Calu3 (cell line): ENCODE measurements at regions of chr7 and their contacts with region 1.

Region 1: DNA sequence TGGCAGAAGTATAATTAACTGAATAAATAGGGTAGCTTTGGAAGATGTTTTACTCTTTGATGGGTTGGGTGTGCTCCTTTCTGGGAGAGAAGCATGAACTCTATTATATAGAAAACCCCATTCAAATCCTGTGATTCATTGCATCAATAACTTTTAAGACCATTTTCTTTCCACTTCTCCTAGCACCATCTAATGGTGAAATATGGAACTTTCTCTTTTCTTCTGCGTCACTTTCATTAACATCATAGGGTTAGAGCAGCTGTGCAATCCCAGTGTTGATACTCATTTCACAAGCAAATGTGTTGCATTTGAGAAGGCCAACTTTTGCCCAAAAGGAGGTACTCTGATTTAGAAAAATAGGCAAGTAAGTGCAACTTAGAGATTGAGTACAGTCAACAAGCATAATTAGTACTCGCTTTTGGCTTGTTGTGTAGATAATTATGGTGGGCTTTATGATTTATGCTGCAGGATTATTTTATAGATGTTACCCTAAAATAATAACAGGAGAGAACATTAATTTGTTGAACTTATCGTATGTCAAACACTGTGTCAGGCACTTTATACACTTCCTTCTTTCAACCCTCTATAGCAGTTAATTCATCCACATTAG is 92.9 kb downstream of the CPED1 start:
- DNase-seq: no peak
- H3K4me3 Mint-ChIP-seq: no peak overlapping the region
- H3K27ac Mint-ChIP-seq: no peak overlapping the region
- H3K4me1 Mint-ChIP-seq: peaks cover 57% of the 10 kb centered on the region
- H3K27me3 Mint-ChIP-seq: no peaks in the 10 kb centered on the region
- CTCF ChIP-seq: peak; percentile 60

Region 2: GRCh38 chr7:120950539-120951308 is 130.7 kb before region 1 on chr7 and contains the start of gene ING3:
- CTCF ChIA-PET with region 1: no interaction called
- intact Hi-C with region 1: no loop called
- DNase-seq: peak; percentile 97
- H3K4me3 Mint-ChIP-seq: peak within 1 kb of the TSS; percentile 66
- H3K27ac Mint-ChIP-seq: peak within 1 kb of the TSS; percentile 74
- H3K4me1 Mint-ChIP-seq: peaks cover 9% of the 10 kb centered on the region
- H3K27me3 Mint-ChIP-seq: no peaks in the 10 kb centered on the region
- CTCF ChIP-seq: no peak
- total RNA-seq, gene ING3: 9.6 and 12.2 TPM in 2 replicates

Region 3: DNA sequence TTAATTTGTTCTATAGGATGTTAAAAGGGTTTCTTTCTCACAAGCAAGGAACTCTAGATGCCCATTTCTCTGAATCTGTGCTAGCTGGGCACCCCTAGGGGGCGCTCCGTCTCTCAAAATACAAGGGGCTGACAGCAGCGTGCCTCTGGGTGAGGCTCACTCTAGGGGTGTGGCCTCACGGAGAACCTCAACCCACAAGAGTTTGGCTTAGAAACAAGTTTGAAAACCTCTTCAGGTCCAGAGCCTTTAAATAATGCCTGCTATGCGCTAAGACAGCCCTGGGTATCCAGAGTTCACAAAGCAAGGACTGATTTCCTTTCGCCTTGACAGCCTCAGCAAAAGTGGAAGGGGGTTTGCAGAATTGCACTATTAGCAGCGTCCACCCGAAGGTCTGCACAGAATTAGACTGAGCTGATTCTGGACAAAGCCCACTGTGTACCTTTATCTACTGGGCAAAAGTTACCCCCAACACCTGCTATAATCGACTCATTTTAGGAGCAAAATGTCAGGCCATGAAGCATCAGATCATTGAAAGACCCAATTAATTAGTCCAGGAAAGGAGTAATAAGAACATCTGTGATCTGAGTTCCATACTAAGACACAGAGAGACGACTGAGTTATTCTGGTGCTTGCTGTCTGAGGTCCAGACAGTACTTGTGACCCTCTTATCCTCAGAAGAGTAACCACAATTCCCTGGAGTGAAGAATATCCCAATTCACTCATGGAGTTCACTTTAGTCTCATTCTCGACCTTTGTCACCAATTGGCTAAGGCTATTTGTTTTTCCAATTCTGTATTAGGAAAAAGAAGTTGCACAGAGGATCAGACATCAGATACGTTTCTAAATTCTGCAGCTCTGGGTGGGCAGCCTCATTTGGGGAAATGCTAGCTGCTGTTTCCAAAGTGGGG is 93.5 kb before region 1 on chr7:
- CTCF ChIA-PET with region 1: interaction called, 14 read pairs
- intact Hi-C with region 1: loop called (anchors 1 kb)
- DNase-seq: peak; percentile 89
- H3K4me3 Mint-ChIP-seq: peak overlapping the region; percentile 84
- H3K27ac Mint-ChIP-seq: no peak overlapping the region
- H3K4me1 Mint-ChIP-seq: peaks cover 22% of the 10 kb centered on the region
- H3K27me3 Mint-ChIP-seq: no peaks in the 10 kb centered on the region
- CTCF ChIP-seq: peak; percentile 88

Region 4: GRCh38 chr7:121020652-121021051 is 60.8 kb before region 1 on chr7:
- CTCF ChIA-PET with region 1: no interaction called
- intact Hi-C with region 1: loop called (anchors 5 kb)
- DNase-seq: no peak
- H3K4me3 Mint-ChIP-seq: no peak overlapping the region
- H3K27ac Mint-ChIP-seq: peak overlapping the region; percentile 60
- H3K4me1 Mint-ChIP-seq: peaks cover 32% of the 10 kb centered on the region
- H3K27me3 Mint-ChIP-seq: no peaks in the 10 kb centered on the region
- CTCF ChIP-seq: no peak

Region 5: DNA sequence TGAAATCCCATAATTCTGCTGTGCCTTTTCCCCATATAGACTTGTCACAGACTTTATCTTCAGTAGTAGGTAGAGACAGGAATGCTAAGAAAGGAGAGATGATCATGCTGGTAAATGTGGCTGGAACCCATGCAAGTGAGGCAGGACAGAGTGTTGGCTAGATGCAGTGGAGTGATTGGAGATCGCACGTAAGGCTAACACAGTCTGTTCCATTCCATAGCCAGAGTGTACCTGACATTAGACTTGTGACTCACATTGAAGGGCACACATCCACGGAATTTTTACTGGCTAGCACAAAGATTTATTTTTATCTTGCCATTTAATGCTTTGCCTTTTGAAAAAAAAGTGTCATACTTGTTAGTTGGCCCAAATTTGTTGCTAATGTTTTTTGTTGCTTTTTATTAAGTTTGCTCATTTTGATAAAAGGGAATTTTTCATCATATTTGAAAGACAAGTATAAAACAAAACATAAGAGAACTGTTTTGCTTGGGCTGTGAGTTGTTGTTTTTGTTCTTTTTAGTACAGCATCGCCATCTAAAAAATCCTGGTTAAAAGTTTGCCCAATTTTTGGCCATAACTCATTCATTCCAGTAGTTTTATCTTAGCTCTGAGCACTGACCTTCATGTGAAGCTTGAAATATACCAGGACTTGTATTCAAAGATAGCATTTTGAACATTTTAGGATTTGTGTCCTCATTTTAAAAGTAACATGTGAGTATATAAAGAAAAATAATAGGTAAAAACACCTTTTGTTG is 11.9 kb before region 1 on chr7:
- CTCF ChIA-PET with region 1: no interaction called
- intact Hi-C with region 1: loop called (anchors 1 kb)
- DNase-seq: no peak
- H3K4me3 Mint-ChIP-seq: no peak overlapping the region
- H3K27ac Mint-ChIP-seq: no peak overlapping the region
- H3K4me1 Mint-ChIP-seq: peaks cover 8% of the 10 kb centered on the region
- H3K27me3 Mint-ChIP-seq: no peaks in the 10 kb centered on the region
- CTCF ChIP-seq: no peak

Region 6: DNA sequence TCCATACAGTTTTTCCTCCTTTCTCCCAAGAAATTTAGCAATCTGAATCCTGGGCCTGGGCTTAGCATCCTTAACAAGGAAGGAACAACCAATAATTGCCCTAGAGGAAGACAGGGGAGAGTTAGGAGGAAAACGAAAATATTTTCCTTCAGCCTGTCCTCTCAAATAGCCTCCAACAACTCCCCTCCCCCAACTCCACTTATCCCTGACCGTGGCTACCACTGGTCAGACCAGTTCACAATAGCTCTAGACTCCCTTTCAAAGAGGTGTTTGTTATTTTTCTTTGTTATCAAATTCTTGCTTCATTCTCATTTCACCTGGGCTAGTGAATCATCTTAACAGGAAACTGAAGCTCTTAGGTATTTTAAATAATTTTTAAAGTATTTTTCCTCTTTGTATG is 21.2 kb after region 1 on chr7:
- CTCF ChIA-PET with region 1: interaction called, 13 read pairs
- intact Hi-C with region 1: loop called (anchors 1 kb)
- DNase-seq: peak; percentile 76
- H3K4me3 Mint-ChIP-seq: peak overlapping the region; percentile 33
- H3K27ac Mint-ChIP-seq: peak overlapping the region; percentile 89
- H3K4me1 Mint-ChIP-seq: peaks cover 37% of the 10 kb centered on the region
- H3K27me3 Mint-ChIP-seq: no peaks in the 10 kb centered on the region
- CTCF ChIP-seq: no peak

Region 7: GRCh38 chr7:121107923-121108498 is 26.6 kb after region 1 on chr7:
- CTCF ChIA-PET with region 1: interaction called, 13 read pairs
- intact Hi-C with region 1: loop called (anchors 1 kb)
- DNase-seq: peak; percentile 24
- H3K4me3 Mint-ChIP-seq: no peak overlapping the region
- H3K27ac Mint-ChIP-seq: no peak overlapping the region
- H3K4me1 Mint-ChIP-seq: peaks cover 10% of the 10 kb centered on the region
- H3K27me3 Mint-ChIP-seq: no peaks in the 10 kb centered on the region
- CTCF ChIP-seq: peak; percentile 59

Region 8: DNA sequence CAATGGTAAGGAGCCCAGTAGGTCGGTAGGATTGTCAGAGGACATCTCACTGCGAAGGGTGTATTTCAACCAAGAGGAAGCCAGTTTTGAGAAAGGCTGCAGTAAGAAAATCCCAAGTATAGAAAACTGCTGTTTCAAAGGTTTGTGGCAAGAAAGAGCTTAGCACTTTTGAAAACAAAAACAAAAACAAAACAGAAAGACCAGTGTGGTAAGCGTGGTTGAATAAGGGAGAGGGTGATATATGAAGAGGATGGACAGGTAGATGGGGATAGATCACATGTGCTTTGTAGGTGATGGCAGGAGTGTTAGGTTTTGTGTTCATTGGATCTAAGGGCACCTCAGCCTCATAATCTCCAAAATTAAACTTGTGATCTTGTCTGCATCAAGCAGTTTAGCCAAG is 105.8 kb after region 1 on chr7:
- CTCF ChIA-PET with region 1: no interaction called
- intact Hi-C with region 1: no loop called
- DNase-seq: no peak
- H3K4me3 Mint-ChIP-seq: no peak overlapping the region
- H3K27ac Mint-ChIP-seq: peak overlapping the region; percentile 45
- H3K4me1 Mint-ChIP-seq: peaks cover 8% of the 10 kb centered on the region
- H3K27me3 Mint-ChIP-seq: no peaks in the 10 kb centered on the region
- CTCF ChIP-seq: no peak